Endothelial cell of umbilical vein (primary cell): ENCODE measurements at regions of chr3 and their contacts with region 1.

Region 1: DNA sequence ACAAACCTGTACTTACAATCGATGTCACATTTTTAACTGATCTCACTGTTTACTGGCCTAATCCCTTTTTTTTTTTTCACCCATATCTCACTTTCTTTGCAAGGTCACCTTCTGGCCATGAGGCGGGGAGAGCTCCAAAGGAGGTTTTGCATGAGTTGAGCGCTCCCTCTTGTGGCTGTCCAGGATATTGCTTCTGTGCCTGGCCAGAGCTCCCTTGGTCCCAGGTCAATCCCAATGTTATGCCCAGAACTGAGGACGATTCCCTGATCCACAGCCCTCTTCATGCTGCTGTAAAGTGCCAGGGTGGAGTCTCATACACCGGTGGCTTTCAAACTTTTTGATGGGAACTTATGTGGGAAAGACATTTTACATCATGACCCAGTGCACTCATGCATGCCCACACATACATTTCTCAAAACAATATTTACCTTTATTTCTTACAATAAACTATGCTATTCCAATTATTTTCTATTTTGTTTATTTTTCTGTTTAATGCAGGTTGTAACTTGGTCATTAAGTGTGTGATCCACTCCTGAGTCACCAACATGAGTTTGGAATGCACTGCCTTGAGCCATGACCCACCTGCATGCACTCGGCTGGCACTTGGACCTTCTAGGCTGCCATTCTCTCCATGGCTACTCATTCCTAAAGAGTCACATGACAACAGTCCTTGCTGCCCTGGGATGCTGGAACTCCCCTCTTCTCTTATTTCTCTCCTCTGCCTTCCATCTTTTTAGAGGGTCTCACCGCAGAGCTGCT is 9.6 kb upstream of the SST start:
- DNase-seq: peak; percentile 58
- H3K4me3 ChIP-seq: no peak overlapping the region
- H3K27ac ChIP-seq: no peak overlapping the region
- H3K4me1 ChIP-seq: no peaks in the 10 kb centered on the region
- H3K27me3 ChIP-seq: peaks cover 0 to 2% of the 10 kb centered on the region in 2 experiments
- CTCF ChIP-seq: peak; percentile 83 to 89
- POLR2A ChIP-seq: no peak

Region 2: DNA sequence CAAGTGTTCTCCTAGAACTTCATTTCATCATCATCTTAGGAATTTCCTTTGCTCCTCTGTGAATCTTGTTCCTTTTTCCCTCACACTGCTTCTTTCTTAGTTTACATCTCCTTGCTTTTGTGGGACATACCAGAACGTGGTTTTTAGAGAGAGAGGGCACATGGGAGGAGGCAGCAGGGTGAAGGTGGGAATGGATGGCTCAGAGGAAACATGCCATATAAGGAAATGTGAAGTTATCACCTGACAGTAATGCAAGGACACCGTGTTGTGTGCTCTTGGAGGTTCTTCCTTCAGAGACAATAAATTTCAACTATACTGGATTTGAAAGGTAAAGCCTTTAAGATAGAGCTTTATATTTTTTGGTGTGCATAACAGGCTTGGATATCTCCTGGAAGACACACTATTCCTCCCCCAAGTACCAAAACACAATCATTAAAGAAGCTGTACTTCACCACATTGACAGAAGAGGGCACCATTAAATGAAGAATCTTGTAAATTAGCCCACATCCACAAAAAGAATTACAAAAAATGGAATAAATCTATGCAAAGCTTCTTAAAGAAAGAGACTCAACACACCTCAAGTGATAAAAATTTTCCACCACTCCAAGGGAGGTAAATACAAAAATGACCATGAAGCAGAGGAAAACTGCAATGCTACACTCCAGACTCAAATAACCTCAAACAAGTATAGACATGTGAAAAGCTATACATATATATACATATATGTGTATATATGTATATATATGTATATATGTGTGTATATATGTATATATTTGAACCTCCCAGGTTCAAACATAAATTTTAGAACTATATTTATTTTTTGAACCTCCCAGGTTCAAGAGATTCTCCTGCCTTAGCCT is 566.7 kb before region 1 on chr3:
- CTCF ChIA-PET with region 1: interaction called, 12 read pairs
- POLR2A ChIA-PET with region 1: no interaction called
- dilution Hi-C with region 1: no loop called
- intact Hi-C with region 1: loop called (anchors 1 kb)
- DNase-seq: peak; percentile 64
- H3K4me3 ChIP-seq: no peak overlapping the region
- H3K27ac ChIP-seq: no peak overlapping the region
- H3K4me1 ChIP-seq: no peaks in the 10 kb centered on the region
- H3K27me3 ChIP-seq: no peaks in the 10 kb centered on the region
- CTCF ChIP-seq: peak; percentile 30 to 39
- POLR2A ChIP-seq: no peak

Region 3: DNA sequence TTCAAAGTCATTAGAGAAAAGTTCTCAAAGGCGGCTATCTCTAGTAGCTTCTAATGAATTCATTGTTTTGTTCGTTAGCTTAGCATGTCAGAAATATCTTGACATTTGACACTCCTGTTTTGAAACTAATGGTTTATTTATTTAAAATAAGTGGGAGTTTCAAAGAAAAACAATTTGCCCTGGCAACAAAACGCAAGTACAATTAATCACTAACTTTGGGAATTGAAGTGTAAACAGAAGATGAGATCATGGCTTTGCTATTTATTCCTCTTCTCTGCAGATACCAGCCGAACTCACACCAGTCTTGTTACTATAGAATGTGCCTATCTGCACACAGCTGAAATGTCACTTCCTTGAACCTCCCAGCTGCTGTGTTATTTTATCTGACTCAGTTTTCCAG is 415.8 kb before region 1 on chr3:
- CTCF ChIA-PET with region 1: interaction called, 10 read pairs
- POLR2A ChIA-PET with region 1: no interaction called
- dilution Hi-C with region 1: no loop called
- intact Hi-C with region 1: no loop called
- DNase-seq: peak; percentile 91
- H3K4me3 ChIP-seq: no peak overlapping the region
- H3K27ac ChIP-seq: peak overlapping the region; percentile 47
- H3K4me1 ChIP-seq: peaks cover 32% of the 10 kb centered on the region
- H3K27me3 ChIP-seq: no peaks in the 10 kb centered on the region
- CTCF ChIP-seq: no peak
- POLR2A ChIP-seq: no peak

Region 4: DNA sequence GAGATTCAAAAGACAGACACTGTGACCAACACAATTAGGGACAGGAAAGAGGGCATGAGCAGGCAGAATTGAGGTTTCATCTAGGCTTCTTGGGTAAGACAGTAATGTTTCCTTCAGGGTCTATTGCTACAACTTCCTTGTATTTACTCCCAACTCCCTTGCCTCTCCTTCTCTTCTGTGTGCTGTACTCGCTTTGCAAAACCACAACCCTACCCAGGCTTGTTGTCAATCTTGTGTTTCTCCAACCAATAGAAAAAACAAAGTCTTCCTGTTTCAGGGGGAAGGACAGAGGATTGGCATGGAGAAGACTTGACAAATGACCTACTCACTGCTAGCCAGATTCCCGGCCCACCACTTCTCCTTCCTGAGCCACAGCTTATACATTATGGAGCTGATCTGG is 352.0 kb before region 1 on chr3:
- CTCF ChIA-PET with region 1: interaction called, 486 read pairs
- POLR2A ChIA-PET with region 1: no interaction called
- dilution Hi-C with region 1: loop called (anchors 25 kb)
- intact Hi-C with region 1: no loop called
- DNase-seq: no peak
- H3K4me3 ChIP-seq: no peak overlapping the region
- H3K27ac ChIP-seq: no peak overlapping the region
- H3K4me1 ChIP-seq: no peaks in the 10 kb centered on the region
- H3K27me3 ChIP-seq: no peaks in the 10 kb centered on the region
- CTCF ChIP-seq: no peak
- POLR2A ChIP-seq: no peak

Region 5: DNA sequence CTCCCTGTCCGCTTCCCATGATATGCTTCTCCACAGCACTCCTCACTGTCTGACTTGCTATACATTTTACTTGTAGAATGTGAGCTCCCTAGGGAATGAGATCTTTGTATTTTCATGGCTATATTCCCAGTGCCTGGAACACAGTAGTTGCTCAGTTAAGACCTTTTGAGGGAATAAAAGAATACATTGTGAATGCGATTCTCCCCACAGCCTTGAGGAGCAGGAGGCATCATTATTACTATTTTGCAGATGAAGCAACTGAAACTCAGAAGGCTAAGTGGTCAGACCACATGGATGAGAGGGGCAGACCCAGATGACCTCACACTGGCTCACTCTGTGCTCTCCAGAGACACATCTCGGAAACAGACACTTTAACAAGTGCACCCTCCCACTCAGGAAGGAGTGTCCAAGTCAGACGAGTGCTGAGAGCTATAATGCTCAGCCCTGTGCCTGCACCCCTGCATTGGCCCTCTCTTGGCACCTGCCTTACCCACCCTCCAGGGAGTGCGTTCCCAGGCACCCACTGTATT is 56.5 kb before region 1 on chr3:
- CTCF ChIA-PET with region 1: interaction called, 17 read pairs
- POLR2A ChIA-PET with region 1: no interaction called
- dilution Hi-C with region 1: no loop called
- intact Hi-C with region 1: no loop called
- DNase-seq: no peak
- H3K4me3 ChIP-seq: no peak overlapping the region
- H3K27ac ChIP-seq: no peak overlapping the region
- H3K4me1 ChIP-seq: no peaks in the 10 kb centered on the region
- H3K27me3 ChIP-seq: no peaks in the 10 kb centered on the region
- CTCF ChIP-seq: no peak
- POLR2A ChIP-seq: no peak

Region 6: DNA sequence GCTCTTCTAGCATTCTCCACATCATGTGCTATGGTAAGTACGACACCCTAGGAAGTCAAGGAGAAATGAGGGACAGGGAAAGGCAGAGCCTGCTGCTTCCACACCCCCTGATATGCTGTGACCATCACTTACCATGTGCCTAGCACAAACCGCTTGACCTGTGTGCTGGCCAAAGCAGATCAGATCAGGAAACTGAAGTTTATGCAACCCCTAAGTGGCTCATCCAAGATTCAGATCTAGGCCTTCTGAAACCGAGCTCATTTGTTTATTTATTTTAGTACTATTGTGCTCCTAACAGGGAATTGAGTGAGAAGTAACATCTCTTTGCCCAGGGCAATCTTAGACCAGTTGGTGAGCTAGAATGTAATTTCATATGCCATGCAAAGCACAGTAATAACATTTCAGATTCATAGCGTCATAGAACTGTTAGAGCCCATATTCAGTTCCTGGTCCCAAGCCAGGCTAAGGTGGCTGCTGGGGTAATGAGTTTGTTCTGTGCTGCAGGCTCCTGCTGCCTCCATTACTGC is 22.8 kb after region 1 on chr3 and contains the start of gene RTP2:
- CTCF ChIA-PET with region 1: interaction called, 22 read pairs
- POLR2A ChIA-PET with region 1: no interaction called
- dilution Hi-C with region 1: no loop called
- intact Hi-C with region 1: no loop called
- DNase-seq: no peak
- H3K4me3 ChIP-seq: no peak within 1 kb of the TSS
- H3K27ac ChIP-seq: no peak within 1 kb of the TSS
- H3K4me1 ChIP-seq: no peaks in the 10 kb centered on the region
- H3K27me3 ChIP-seq: no peaks in the 10 kb centered on the region
- CTCF ChIP-seq: no peak
- POLR2A ChIP-seq: no peak
- total RNA-seq, gene RTP2: not detected in 2 replicates

Region 7: GRCh38 chr3:187946163-187946691 is 266.4 kb after region 1 on chr3:
- CTCF ChIA-PET with region 1: no interaction called
- POLR2A ChIA-PET with region 1: no interaction called
- dilution Hi-C with region 1: no loop called
- intact Hi-C with region 1: no loop called
- DNase-seq: no peak
- H3K4me3 ChIP-seq: no peak overlapping the region
- H3K27ac ChIP-seq: no peak overlapping the region
- H3K4me1 ChIP-seq: no peaks in the 10 kb centered on the region
- H3K27me3 ChIP-seq: peaks cover 7 to 18% of the 10 kb centered on the region in 2 experiments
- CTCF ChIP-seq: no peak
- POLR2A ChIP-seq: no peak